ENCODE measurements at regions of chr12 and their contacts with region 1.

Region 1: GRCh38 chr12:24991209-24992049 is 42.5 kb upstream of the BCAT1 start:
- DNase-seq: no peak
- H3K4me3 ChIP-seq: no peak overlapping the region
- H3K27ac ChIP-seq: no peak overlapping the region
- H3K4me1 ChIP-seq: no peaks in the 10 kb centered on the region
- H3K27me3 ChIP-seq: no peaks in the 10 kb centered on the region
- CTCF ChIP-seq: peak; percentile 55 to 70 (median 63)
- EP300 ChIP-seq: no peak
- POLR2A ChIP-seq: no peak

Region 2: GRCh38 chr12:24879644-24880043 is 111.8 kb before region 1 on chr12:
- in situ Hi-C with region 1: no loop called
- intact Hi-C with region 1: no loop called
- DNase-seq: no peak
- H3K4me3 ChIP-seq: no peak overlapping the region
- H3K27ac ChIP-seq: no peak overlapping the region
- H3K4me1 ChIP-seq: no peaks in the 10 kb centered on the region
- H3K27me3 ChIP-seq: no peaks in the 10 kb centered on the region
- CTCF ChIP-seq: no peak
- EP300 ChIP-seq: no peak
- POLR2A ChIP-seq: no peak

Region 3: GRCh38 chr12:25130741-25131188 is 139.3 kb after region 1 on chr12:
- in situ Hi-C with region 1: loop called (anchors 5 to 10 kb)
- intact Hi-C with region 1: no loop called
- DNase-seq: no peak
- H3K4me3 ChIP-seq: no peak overlapping the region
- H3K27ac ChIP-seq: no peak overlapping the region
- H3K4me1 ChIP-seq: no peaks in the 10 kb centered on the region
- H3K27me3 ChIP-seq: no peaks in the 10 kb centered on the region
- CTCF ChIP-seq: peak; percentile 53 to 63 (median 55)
- EP300 ChIP-seq: no peak
- POLR2A ChIP-seq: no peak

Region 4: DNA sequence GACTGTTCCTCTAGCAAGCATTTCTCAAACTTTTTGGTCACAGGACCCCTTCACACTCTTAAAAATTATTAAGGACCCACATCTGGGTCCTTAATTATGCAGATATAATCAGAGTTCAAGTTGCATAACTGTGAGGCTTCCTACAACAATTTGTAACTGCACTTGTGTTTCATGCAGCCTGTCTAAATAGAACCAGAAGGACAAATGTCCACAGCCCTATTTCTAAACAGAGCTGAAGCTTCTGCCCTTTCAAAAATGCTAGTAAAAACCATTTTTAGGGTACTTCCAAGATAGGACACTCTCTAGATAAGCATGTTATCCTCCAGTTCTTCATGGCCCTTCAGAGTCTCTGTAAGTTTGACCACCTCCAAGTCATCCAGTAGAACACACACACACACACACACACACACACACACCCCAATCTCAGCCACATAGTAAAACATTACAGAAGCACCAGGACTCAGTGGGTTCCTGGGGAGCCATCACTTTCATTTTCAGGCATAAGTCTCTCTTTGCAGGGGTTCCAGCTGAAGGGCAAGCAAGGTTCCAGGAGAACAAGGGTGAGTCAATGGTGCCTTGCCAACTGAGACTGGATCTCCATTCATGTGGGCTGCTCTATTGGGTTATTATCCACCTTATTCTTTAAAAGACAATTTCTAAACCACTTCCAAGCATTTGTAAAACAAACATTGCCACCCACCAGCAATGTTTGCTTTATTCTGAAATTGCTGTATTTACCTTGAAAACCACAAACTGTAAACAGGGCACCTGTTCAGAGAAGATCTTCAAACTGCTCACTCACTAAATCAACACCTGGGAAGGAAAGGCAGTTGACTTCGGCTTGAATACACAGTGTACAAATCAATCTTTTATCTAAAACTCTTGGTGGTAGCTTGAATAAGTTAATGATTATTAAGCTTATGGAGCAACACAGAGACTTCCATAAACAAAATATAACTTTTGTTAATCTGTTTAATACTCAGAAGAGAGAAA is 1777.5 kb after region 1 on chr12:
- in situ Hi-C with region 1: no loop called
- intact Hi-C with region 1: loop called (anchors 5 kb)
- DNase-seq: no peak
- H3K4me3 ChIP-seq: no peak overlapping the region
- H3K27ac ChIP-seq: no peak overlapping the region
- H3K4me1 ChIP-seq: peaks cover 0 to 27% (median 10%) of the 10 kb centered on the region in 4 donors
- H3K27me3 ChIP-seq: no peaks in the 10 kb centered on the region
- CTCF ChIP-seq: no peak
- EP300 ChIP-seq: no peak
- POLR2A ChIP-seq: no peak